OCI-LY7 (cell line): ENCODE measurements at regions of chr11 and their contacts with region 1.

Region 1: GRCh38 chr11:121426476-121427399 is 25.4 kb upstream of the SORL1 start:
- DNase-seq: peak; percentile 84
- H3K4me3 ChIP-seq: peak overlapping the region; percentile 44
- H3K27ac ChIP-seq: peak overlapping the region; percentile 99
- H3K4me1 ChIP-seq: peaks cover 98% of the 10 kb centered on the region
- CTCF ChIP-seq: peak; percentile 67

Region 2: DNA sequence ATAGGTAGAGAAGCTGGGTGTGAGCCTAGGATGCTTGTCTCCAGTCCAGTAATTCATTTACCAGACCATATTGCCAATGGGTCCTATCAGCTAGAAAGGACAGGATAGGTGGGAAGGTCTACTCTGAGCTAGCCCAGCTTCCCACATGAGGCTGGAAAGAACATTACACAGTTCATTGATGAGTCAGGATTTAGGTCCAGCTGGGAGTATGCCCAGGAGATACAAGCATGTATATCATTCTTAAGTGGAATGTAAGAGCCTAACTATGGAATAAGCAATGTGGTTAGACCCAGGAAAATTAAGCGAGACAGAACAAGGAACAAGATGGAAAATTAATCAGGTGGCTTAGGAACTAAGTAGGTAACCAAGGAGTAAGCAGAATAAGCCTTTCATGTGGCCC is 461.9 kb before region 1 on chr11:
- CTCF ChIA-PET with region 1: no interaction called
- POLR2A ChIA-PET with region 1: no interaction called
- intact Hi-C with region 1: no loop called
- DNase-seq: no peak
- H3K4me3 ChIP-seq: no peak overlapping the region
- H3K27ac ChIP-seq: no peak overlapping the region
- H3K4me1 ChIP-seq: no peaks in the 10 kb centered on the region
- CTCF ChIP-seq: no peak

Region 3: GRCh38 chr11:121082670-121083069 is 344.1 kb before region 1 on chr11:
- CTCF ChIA-PET with region 1: no interaction called
- POLR2A ChIA-PET with region 1: no interaction called
- intact Hi-C with region 1: no loop called
- DNase-seq: no peak
- H3K4me3 ChIP-seq: no peak overlapping the region
- H3K27ac ChIP-seq: no peak overlapping the region
- H3K4me1 ChIP-seq: no peaks in the 10 kb centered on the region
- CTCF ChIP-seq: no peak

Region 4: DNA sequence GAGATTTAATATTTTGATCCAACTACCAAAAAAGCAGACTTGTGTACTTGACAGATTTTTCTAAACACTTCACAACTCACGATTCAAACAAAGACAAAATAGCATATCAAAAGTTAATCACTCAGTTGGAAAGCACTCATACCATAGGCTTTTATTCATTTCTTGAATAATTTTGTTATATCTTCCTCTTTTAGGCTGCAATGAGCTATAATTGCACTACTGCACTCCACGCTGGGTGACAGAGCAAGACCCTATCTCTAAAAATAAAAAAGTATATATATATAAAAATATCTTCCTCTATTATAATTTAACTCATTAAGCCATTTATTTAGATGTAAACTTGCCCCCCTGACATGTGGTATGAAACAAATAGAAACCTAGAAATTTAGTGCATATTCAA is 114.3 kb before region 1 on chr11:
- CTCF ChIA-PET with region 1: interaction called, 10 read pairs
- POLR2A ChIA-PET with region 1: no interaction called
- intact Hi-C with region 1: no loop called
- DNase-seq: no peak
- H3K4me3 ChIP-seq: no peak overlapping the region
- H3K27ac ChIP-seq: no peak overlapping the region
- H3K4me1 ChIP-seq: peaks cover 10% of the 10 kb centered on the region
- CTCF ChIP-seq: no peak

Region 5: GRCh38 chr11:121328967-121329679 is 97.6 kb before region 1 on chr11:
- CTCF ChIA-PET with region 1: no interaction called
- POLR2A ChIA-PET with region 1: interaction called, 37 read pairs
- intact Hi-C with region 1: no loop called
- DNase-seq: peak; percentile 66
- H3K4me3 ChIP-seq: peak overlapping the region; percentile 25
- H3K27ac ChIP-seq: peak overlapping the region; percentile 87
- H3K4me1 ChIP-seq: peaks cover 62% of the 10 kb centered on the region
- CTCF ChIP-seq: no peak

Region 6: DNA sequence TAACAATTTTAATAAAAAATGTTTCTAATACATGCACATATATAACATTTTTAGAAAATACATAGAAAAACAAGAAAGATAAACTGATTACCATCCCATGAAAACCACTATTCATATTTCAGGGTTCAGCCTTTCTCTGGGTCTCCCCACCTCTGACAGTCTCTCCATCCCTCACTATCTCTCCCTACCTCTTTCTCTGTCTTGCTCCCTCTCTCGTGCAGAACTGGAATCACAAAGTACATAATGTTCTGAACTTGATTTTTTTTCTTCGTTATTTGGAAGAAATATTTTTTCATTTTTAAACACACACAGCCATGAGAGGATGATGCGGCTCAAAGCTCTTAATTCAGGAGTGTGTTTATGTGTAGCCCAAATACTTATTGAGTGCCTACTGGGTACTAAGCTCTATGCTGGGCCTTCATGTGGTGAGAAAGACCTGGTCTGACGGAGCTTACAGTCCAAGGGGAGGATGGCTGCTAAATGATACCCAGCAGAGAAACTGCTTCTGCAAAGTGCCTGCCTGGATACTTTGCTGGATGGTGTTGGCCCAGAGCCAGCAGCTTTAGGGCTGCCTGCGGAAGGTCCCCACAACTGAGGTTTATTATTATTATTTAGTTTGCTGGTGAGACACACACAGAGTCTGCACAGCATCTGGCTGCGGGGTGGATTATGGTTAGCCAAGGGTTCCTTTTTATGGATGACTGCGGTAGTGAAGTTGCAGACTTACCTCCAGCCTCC is 91.6 kb before region 1 on chr11:
- CTCF ChIA-PET with region 1: no interaction called
- POLR2A ChIA-PET with region 1: interaction called, 14 read pairs
- intact Hi-C with region 1: no loop called
- DNase-seq: peak; percentile 43
- H3K4me3 ChIP-seq: no peak overlapping the region
- H3K27ac ChIP-seq: peak overlapping the region; percentile 63
- H3K4me1 ChIP-seq: peaks cover 65% of the 10 kb centered on the region
- CTCF ChIP-seq: peak; percentile 78

Region 7: DNA sequence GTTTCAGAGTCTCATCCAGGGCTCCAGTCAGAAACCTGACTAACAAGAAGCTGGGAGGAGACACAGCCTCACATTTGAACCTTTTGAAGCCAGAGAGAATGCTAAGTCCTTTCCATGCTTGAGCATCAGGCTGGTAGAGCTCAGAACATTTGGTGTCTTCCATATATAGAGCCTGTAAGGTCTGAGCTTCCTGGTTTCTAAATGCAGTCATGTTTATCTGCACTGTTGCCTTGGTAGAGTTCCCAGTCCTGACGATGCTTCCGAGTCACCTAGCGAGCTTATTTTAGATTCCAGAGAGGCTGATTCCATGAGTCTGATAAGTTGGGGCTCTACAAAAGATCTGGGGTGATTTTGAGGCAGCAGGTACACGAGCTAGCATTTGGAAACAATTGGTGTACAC is 43.0 kb before region 1 on chr11:
- CTCF ChIA-PET with region 1: interaction called, 3 read pairs
- POLR2A ChIA-PET with region 1: interaction called, 218 read pairs
- intact Hi-C with region 1: no loop called
- DNase-seq: no peak
- H3K4me3 ChIP-seq: no peak overlapping the region
- H3K27ac ChIP-seq: peak overlapping the region; percentile 84
- H3K4me1 ChIP-seq: peaks cover 92% of the 10 kb centered on the region
- CTCF ChIP-seq: no peak

Region 8: GRCh38 chr11:121591405-121592033 is 164.8 kb after region 1 on chr11:
- CTCF ChIA-PET with region 1: no interaction called
- POLR2A ChIA-PET with region 1: no interaction called
- intact Hi-C with region 1: loop called (anchors 1 kb)
- DNase-seq: peak; percentile 87
- H3K4me3 ChIP-seq: peak overlapping the region; percentile 66
- H3K27ac ChIP-seq: peak overlapping the region; percentile 98
- H3K4me1 ChIP-seq: peaks cover 69% of the 10 kb centered on the region
- CTCF ChIP-seq: peak; percentile 97